Sciatic nerve (tissue), 2 donors: ENCODE measurements at regions of chr16 and their contacts with region 1.

Region 1: GRCh38 chr16:59859676-59860402 is 1125.7 kb upstream of the GOT2 start:
- DNase-seq: no peak
- ATAC-seq: peak; percentile 80

Region 2: DNA sequence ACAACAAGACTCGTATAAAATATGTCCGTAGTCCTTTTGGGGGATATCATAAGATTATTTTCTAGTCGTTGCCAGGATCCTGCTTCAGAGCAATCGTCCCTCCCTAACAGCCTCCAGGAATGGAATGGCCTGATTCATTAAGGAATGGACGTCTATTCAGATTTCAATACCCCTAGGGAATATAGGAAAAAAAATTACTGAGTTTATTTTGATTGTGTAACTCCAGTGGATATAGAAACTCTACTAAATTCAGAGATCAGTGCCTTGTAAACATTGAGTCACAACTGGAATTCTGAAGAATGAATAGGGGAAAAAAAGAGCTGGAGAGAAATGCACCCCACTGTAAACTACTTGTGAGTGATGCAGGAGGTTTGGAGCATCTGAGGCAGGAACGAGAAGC is 45.8 kb after region 1 on chr16:
- intact Hi-C with region 1: no loop called
- DNase-seq: no peak
- ATAC-seq: no peak

Region 3: DNA sequence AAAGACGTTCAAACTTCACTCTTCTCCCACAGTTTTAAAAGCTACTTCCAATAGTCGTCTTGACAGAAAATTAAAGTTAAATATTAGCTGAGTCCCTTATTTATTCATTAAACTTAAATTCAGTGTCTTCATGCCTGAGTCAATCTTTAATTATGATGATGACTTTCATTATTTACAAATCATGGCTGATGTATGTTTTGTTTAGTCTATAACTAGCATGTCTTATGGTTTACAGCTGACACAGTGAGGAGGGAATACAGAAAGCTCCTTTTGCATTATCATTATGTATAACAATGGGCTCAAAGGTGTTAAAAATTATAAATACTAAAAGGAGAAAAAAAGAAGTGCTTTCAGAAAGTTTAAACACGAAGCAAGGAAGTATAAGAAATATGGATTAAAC is 843.3 kb after region 1 on chr16:
- intact Hi-C with region 1: loop called (anchors 10 kb)
- DNase-seq: no peak
- ATAC-seq: no peak